GM12878 (cell line): ENCODE measurements at regions of chr2 and their contacts with region 1.

Region 1: GRCh38 chr2:68385220-68385906 is 20.3 kb downstream of the PLEK start:
- DNase-seq: peak; percentile 95
- ATAC-seq: peak; percentile 74
- H3K4me3 ChIP-seq: no peak overlapping the region
- H3K27ac ChIP-seq: peak overlapping the region; percentile 90
- H3K4me1 ChIP-seq: peaks cover 88% of the 10 kb centered on the region
- H3K27me3 ChIP-seq: no peaks in the 10 kb centered on the region
- CTCF ChIP-seq: peak in 1 of 3 experiments; percentile 11; a peak in 1 of 6 replicates
- EP300 ChIP-seq: peak; percentile 62 to 81; a peak in 2 of 4 replicates
- POLR2A ChIP-seq: peak; percentile 59
- RAD21 ChIP-seq: no peak

Region 2: GRCh38 chr2:68190991-68191731 is 194.2 kb before region 1 on chr2:
- CTCF ChIA-PET with region 1: no interaction called
- POLR2A ChIA-PET with region 1: no interaction called
- RAD21 ChIA-PET with region 1: no interaction called
- SMC1A ChIA-PET with region 1: no interaction called
- in situ Hi-C with region 1: no loop called
- intact Hi-C with region 1: no loop called
- DNase-seq: no peak
- ATAC-seq: peak; percentile 73
- H3K4me3 ChIP-seq: no peak overlapping the region
- H3K27ac ChIP-seq: no peak overlapping the region
- H3K4me1 ChIP-seq: no peaks in the 10 kb centered on the region
- H3K27me3 ChIP-seq: no peaks in the 10 kb centered on the region
- CTCF ChIP-seq: no peak
- EP300 ChIP-seq: no peak
- POLR2A ChIP-seq: no peak
- RAD21 ChIP-seq: no peak

Region 3: GRCh38 chr2:68336192-68336591 is 49.2 kb before region 1 on chr2:
- CTCF ChIA-PET with region 1: no interaction called
- POLR2A ChIA-PET with region 1: no interaction called
- RAD21 ChIA-PET with region 1: no interaction called
- SMC1A ChIA-PET with region 1: no interaction called
- in situ Hi-C with region 1: no loop called
- intact Hi-C with region 1: no loop called
- DNase-seq: no peak
- ATAC-seq: no peak
- H3K4me3 ChIP-seq: no peak overlapping the region
- H3K27ac ChIP-seq: no peak overlapping the region
- H3K4me1 ChIP-seq: no peaks in the 10 kb centered on the region
- H3K27me3 ChIP-seq: no peaks in the 10 kb centered on the region; a peak in 1 of 4 replicates
- CTCF ChIP-seq: no peak
- EP300 ChIP-seq: no peak
- POLR2A ChIP-seq: no peak
- RAD21 ChIP-seq: no peak

Region 4: GRCh38 chr2:68362069-68362468 is 23.3 kb before region 1 on chr2:
- CTCF ChIA-PET with region 1: interaction called, 9 read pairs
- POLR2A ChIA-PET with region 1: interaction called, 53 read pairs
- RAD21 ChIA-PET with region 1: interaction called, 82 read pairs
- SMC1A ChIA-PET with region 1: interaction called, 51 read pairs
- in situ Hi-C with region 1: no loop called
- intact Hi-C with region 1: loop called (anchors 1 kb)
- DNase-seq: peak; percentile 78
- ATAC-seq: peak; percentile 54
- H3K4me3 ChIP-seq: peak overlapping the region; percentile 33; the same call in 1 of the 2 replicates
- H3K27ac ChIP-seq: peak overlapping the region; percentile 94
- H3K4me1 ChIP-seq: peaks cover 21% of the 10 kb centered on the region
- H3K27me3 ChIP-seq: no peaks in the 10 kb centered on the region
- CTCF ChIP-seq: peak; percentile 75 to 92 (median 81)
- EP300 ChIP-seq: peak; percentile 34 to 68; a peak in 1 of 4 replicates
- POLR2A ChIP-seq: peak; percentile 68
- RAD21 ChIP-seq: peak; percentile 97

Region 5: DNA sequence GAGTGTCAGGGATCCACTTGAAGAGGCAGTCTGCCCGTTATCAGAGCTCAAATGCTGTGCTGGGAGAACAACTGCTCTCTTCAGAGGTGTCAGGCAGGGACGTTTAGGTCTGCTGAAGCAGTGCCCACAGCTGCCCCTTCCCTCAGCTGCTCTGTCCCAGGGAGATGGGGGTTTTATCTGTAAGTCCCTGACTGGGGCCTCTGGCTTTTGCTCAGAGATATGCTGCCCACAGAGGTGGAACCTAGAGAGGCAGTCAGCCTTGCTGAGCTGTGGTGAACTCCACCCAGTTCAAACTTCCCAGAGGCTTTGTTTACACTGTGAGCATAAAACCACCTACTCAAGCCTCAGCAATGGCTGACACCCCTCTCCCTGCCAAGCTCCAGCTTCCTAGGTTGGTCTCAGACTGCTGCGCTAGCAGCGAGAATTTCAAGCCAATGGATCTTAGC is 17.9 kb after region 1 on chr2:
- CTCF ChIA-PET with region 1: interaction called, 9 read pairs
- POLR2A ChIA-PET with region 1: interaction called, 48 read pairs
- RAD21 ChIA-PET with region 1: interaction called, 49 read pairs
- SMC1A ChIA-PET with region 1: interaction called, 113 read pairs
- in situ Hi-C with region 1: no loop called
- intact Hi-C with region 1: no loop called
- DNase-seq: no peak
- ATAC-seq: peak; percentile 89
- H3K4me3 ChIP-seq: no peak overlapping the region
- H3K27ac ChIP-seq: peak overlapping the region; percentile 52
- H3K4me1 ChIP-seq: peaks cover 25% of the 10 kb centered on the region
- H3K27me3 ChIP-seq: no peaks in the 10 kb centered on the region
- CTCF ChIP-seq: no peak
- EP300 ChIP-seq: no peak
- POLR2A ChIP-seq: no peak
- RAD21 ChIP-seq: no peak

Region 6: GRCh38 chr2:68423966-68424650 is 38.7 kb after region 1 on chr2:
- CTCF ChIA-PET with region 1: interaction called, 4 read pairs
- POLR2A ChIA-PET with region 1: interaction called, 40 read pairs
- RAD21 ChIA-PET with region 1: interaction called, 33 read pairs
- SMC1A ChIA-PET with region 1: interaction called, 207 read pairs
- in situ Hi-C with region 1: no loop called
- intact Hi-C with region 1: loop called (anchors 1 kb)
- DNase-seq: peak; percentile 98
- ATAC-seq: peak; percentile 85
- H3K4me3 ChIP-seq: peak overlapping the region; percentile 18; the same call in 1 of the 2 replicates
- H3K27ac ChIP-seq: peak overlapping the region; percentile 88
- H3K4me1 ChIP-seq: peaks cover 64% of the 10 kb centered on the region
- H3K27me3 ChIP-seq: no peaks in the 10 kb centered on the region
- CTCF ChIP-seq: no peak
- EP300 ChIP-seq: peak; percentile 91 to 92
- POLR2A ChIP-seq: no peak
- RAD21 ChIP-seq: peak; percentile 18; the same call in 1 of the 2 replicates

Region 7: GRCh38 chr2:68435615-68436014 is 50.3 kb after region 1 on chr2:
- CTCF ChIA-PET with region 1: interaction called, 85 read pairs
- POLR2A ChIA-PET with region 1: interaction called, 42 read pairs
- RAD21 ChIA-PET with region 1: interaction called, 211 read pairs
- SMC1A ChIA-PET with region 1: interaction called, 259 read pairs
- in situ Hi-C with region 1: no loop called
- intact Hi-C with region 1: no loop called
- DNase-seq: no peak
- ATAC-seq: no peak
- H3K4me3 ChIP-seq: no peak overlapping the region
- H3K27ac ChIP-seq: no peak overlapping the region
- H3K4me1 ChIP-seq: peaks cover 24% of the 10 kb centered on the region
- H3K27me3 ChIP-seq: no peaks in the 10 kb centered on the region
- CTCF ChIP-seq: no peak
- EP300 ChIP-seq: no peak
- POLR2A ChIP-seq: no peak
- RAD21 ChIP-seq: no peak

Region 8: GRCh38 chr2:68751397-68752339 is 366.3 kb after region 1 on chr2:
- CTCF ChIA-PET with region 1: no interaction called
- POLR2A ChIA-PET with region 1: no interaction called
- RAD21 ChIA-PET with region 1: no interaction called
- SMC1A ChIA-PET with region 1: no interaction called
- in situ Hi-C with region 1: no loop called
- intact Hi-C with region 1: no loop called
- DNase-seq: no peak
- ATAC-seq: peak; percentile 99
- H3K4me3 ChIP-seq: no peak overlapping the region
- H3K27ac ChIP-seq: no peak overlapping the region
- H3K4me1 ChIP-seq: no peaks in the 10 kb centered on the region
- H3K27me3 ChIP-seq: peaks cover 0 to 1% of the 10 kb centered on the region in 2 experiments; a peak in 2 of 4 replicates
- CTCF ChIP-seq: peak; percentile 90 to 94 (median 92)
- EP300 ChIP-seq: no peak
- POLR2A ChIP-seq: no peak
- RAD21 ChIP-seq: peak; percentile 89